Endothelial cell of umbilical vein (primary cell): ENCODE measurements at regions of chr1 and their contacts with region 1.

Region 1: GRCh38 chr1:93078986-93079654 is at the start of gene MTF2:
- DNase-seq: peak; percentile 97
- H3K4me3 ChIP-seq: peak within 1 kb of the TSS; percentile 81 to 90 (median 89)
- H3K27ac ChIP-seq: peak within 1 kb of the TSS; percentile 87
- H3K4me1 ChIP-seq: peaks cover 23% of the 10 kb centered on the region
- H3K27me3 ChIP-seq: no peaks in the 10 kb centered on the region
- CTCF ChIP-seq: no peak
- POLR2A ChIP-seq: peak; percentile 98
- total RNA-seq, gene MTF2: 40.5 and 42.6 TPM in 2 replicates

Region 2: DNA sequence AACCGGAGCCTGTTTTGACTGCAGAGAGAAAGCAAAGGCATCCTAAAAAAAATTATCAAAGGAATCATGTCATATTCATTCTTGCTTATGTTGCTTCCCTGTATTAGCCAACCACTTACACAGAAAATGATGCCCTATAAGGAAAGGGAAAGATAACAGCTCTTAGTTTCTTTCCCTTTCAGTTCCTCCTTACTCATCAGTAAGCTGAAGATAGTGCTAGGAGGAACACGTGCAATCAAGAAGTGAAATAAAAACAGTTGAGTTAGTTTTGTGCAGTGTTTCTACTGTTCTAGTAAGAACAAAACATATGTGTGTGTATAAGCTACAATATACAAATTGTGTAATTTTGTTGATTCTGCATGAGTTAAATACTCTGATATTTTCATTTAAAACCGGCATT is 45.3 kb before region 1 on chr1:
- CTCF ChIA-PET with region 1: no interaction called
- POLR2A ChIA-PET with region 1: no interaction called
- dilution Hi-C with region 1: no loop called
- intact Hi-C with region 1: no loop called
- DNase-seq: no peak
- H3K4me3 ChIP-seq: no peak overlapping the region
- H3K27ac ChIP-seq: no peak overlapping the region
- H3K4me1 ChIP-seq: no peaks in the 10 kb centered on the region
- H3K27me3 ChIP-seq: peaks cover 10 to 12% of the 10 kb centered on the region in 2 experiments
- CTCF ChIP-seq: no peak
- POLR2A ChIP-seq: no peak

Region 3: DNA sequence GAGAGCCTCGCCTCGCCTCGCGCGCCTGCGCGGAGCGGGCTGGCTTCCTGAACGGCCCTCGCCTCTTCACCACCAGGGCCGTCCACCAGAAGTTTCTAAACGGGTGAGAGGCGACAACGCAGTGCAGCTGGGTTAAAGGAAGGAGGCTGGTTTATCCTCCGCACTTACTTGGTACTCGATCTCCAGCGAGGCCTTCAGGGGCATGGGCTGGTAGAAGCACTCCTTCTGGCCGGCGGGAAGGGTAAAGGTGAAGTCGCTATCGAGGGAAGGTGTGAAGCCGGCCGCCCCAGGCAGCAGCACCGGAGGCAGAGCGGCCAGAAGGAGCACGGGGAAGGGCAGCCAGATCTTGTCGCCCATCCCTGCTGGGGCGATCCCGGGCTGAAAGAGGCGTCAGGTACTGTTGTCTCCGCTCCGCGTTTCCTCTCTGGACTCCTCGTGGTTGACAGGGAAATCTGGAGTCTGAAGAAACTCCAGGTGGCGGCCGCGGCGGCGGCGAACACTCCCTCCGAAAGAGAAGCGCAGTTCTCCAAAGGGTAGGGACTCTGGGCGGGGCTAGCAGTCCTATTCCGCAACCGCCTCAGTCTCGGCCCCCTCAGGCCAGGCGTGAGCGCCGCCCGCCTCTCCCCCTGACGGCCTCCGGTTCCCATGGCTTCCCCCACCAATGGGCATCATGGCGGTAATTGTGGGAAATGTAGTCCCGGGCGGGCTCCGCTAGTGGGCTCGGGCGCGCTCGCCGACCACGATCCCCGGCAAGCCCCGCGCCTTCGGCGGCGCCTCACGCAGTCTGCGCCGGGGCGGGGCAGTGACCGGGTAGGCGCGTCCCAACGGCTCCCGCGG is 101.0 kb after region 1 on chr1 and contains the start of gene TMED5:
- CTCF ChIA-PET with region 1: interaction called, 8 read pairs
- POLR2A ChIA-PET with region 1: no interaction called
- dilution Hi-C with region 1: no loop called
- intact Hi-C with region 1: loop called (anchors 1 kb)
- DNase-seq: peak; percentile 99
- H3K4me3 ChIP-seq: peak within 1 kb of the TSS; percentile 80 to 87 (median 85)
- H3K27ac ChIP-seq: peak within 1 kb of the TSS; percentile 69
- H3K4me1 ChIP-seq: peaks cover 16% of the 10 kb centered on the region
- H3K27me3 ChIP-seq: no peaks in the 10 kb centered on the region
- CTCF ChIP-seq: peak in 1 of 2 donors; percentile 27
- POLR2A ChIP-seq: peak; percentile 91
- total RNA-seq, gene TMED5: 48.8 and 51.2 TPM in 2 replicates

Region 4: GRCh38 chr1:93345633-93346420 is 266.7 kb after region 1 on chr1 and contains the start of gene DR1:
- CTCF ChIA-PET with region 1: no interaction called
- POLR2A ChIA-PET with region 1: no interaction called
- dilution Hi-C with region 1: no loop called
- intact Hi-C with region 1: loop called (anchors 5 kb)
- DNase-seq: peak; percentile 94
- H3K4me3 ChIP-seq: peak within 1 kb of the TSS; percentile 89 to 99 (median 97)
- H3K27ac ChIP-seq: peak within 1 kb of the TSS; percentile 88
- H3K4me1 ChIP-seq: peaks cover 22% of the 10 kb centered on the region
- H3K27me3 ChIP-seq: no peaks in the 10 kb centered on the region
- CTCF ChIP-seq: no peak
- POLR2A ChIP-seq: peak; percentile 93
- total RNA-seq, gene DR1: 49.4 and 52.2 TPM in 2 replicates

Region 5: GRCh38 chr1:93437976-93438605 is 359.0 kb after region 1 on chr1:
- CTCF ChIA-PET with region 1: interaction called, 9 read pairs
- POLR2A ChIA-PET with region 1: no interaction called
- dilution Hi-C with region 1: no loop called
- intact Hi-C with region 1: loop called (anchors 5 kb)
- DNase-seq: peak; percentile 69
- H3K4me3 ChIP-seq: no peak overlapping the region
- H3K27ac ChIP-seq: no peak overlapping the region
- H3K4me1 ChIP-seq: no peaks in the 10 kb centered on the region
- H3K27me3 ChIP-seq: peaks cover 0 to 12% of the 10 kb centered on the region in 2 experiments
- CTCF ChIP-seq: peak; percentile 26 to 29
- POLR2A ChIP-seq: no peak